ENCODE measurements at regions of chr11 and their contacts with region 1.

Region 1: DNA sequence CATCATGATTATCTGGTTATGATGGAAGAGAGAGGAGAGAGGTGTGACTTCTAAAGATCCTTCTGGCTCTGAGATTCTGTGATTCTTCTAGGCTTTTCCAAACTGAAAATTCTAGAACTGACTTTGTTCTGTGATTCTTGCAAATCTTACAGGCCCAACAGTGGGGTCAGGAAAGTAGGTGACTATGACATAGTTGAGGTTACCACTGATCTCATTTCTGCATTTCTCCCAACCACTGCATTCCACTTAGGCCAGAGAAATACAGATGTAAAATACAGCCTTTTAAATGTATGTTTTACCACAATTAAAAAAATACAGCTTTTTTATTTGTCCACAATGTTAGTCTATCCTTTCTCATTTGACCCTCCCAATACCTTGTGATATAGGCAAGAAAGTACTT is 83.7 kb downstream of the STIM1 start:
- DNase-seq: no peak
- ATAC-seq: peak; percentile 45
- H3K4me3 Mint-ChIP-seq: no peak overlapping the region
- H3K27ac Mint-ChIP-seq: no peak overlapping the region
- H3K4me1 Mint-ChIP-seq: peaks cover 81% of the 10 kb centered on the region
- H3K27me3 Mint-ChIP-seq: no peaks in the 10 kb centered on the region
- CTCF ChIP-seq: no peak

Region 2: GRCh38 chr11:3905080-3905953 is 33.9 kb before region 1 on chr11:
- CTCF ChIA-PET with region 1: no interaction called
- POLR2A ChIA-PET with region 1: no interaction called
- intact Hi-C with region 1: loop called (anchors 5 kb)
- DNase-seq: no peak
- ATAC-seq: peak; percentile 79
- H3K4me3 Mint-ChIP-seq: peak overlapping the region; percentile 17
- H3K27ac Mint-ChIP-seq: peak overlapping the region; percentile 8
- H3K4me1 Mint-ChIP-seq: peaks cover 84% of the 10 kb centered on the region
- H3K27me3 Mint-ChIP-seq: no peaks in the 10 kb centered on the region
- CTCF ChIP-seq: no peak

Region 3: DNA sequence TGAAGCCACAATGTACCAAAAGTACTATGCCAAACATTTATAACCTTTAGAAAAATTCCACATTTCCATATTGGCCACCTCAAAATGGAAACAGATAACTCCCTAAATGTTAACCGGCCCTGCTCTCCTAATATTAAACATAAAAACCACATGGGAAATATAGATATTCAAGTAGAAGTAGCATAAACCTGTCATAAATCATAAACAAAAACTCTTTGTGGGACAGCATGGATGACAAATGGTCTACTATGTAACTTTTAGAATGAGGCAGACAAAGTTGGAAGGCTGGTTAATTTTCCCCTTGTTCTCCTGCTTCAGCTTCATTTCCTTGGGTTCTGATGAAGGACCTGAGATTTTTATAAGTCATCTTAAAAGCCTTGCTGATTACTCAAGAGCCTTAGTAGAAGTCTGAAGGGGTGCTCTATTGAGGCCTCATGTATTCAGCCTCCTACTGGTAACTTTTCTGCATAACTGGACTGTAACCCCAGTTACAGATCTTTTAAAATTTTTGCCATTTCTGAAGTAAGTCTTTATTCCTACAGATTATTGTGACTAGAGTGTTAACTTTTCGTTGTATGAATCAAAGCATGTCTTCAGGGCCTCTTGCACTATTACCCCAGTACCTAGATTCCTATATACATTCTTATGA is 32.7 kb after region 1 on chr11:
- CTCF ChIA-PET with region 1: no interaction called
- POLR2A ChIA-PET with region 1: interaction called, 3 read pairs
- intact Hi-C with region 1: loop called (anchors 5 kb)
- DNase-seq: no peak
- ATAC-seq: peak; percentile 60
- H3K4me3 Mint-ChIP-seq: no peak overlapping the region
- H3K27ac Mint-ChIP-seq: no peak overlapping the region
- H3K4me1 Mint-ChIP-seq: peaks cover 11% of the 10 kb centered on the region
- H3K27me3 Mint-ChIP-seq: no peaks in the 10 kb centered on the region
- CTCF ChIP-seq: no peak

Region 4: GRCh38 chr11:3995949-3996554 is 56.8 kb after region 1 on chr11:
- CTCF ChIA-PET with region 1: no interaction called
- POLR2A ChIA-PET with region 1: no interaction called
- intact Hi-C with region 1: no loop called
- DNase-seq: no peak
- ATAC-seq: peak; percentile 37
- H3K4me3 Mint-ChIP-seq: no peak overlapping the region
- H3K27ac Mint-ChIP-seq: no peak overlapping the region
- H3K4me1 Mint-ChIP-seq: peaks cover 29% of the 10 kb centered on the region
- H3K27me3 Mint-ChIP-seq: no peaks in the 10 kb centered on the region
- CTCF ChIP-seq: no peak